Activated CD4-positive, alpha-beta T cell treated with anti-CD3 and anti-CD28 coated beads, Interleukin-2, amount 10 ng/mL, durations not matched to agents 24 days and 14 days (primary cell): ENCODE measurements at regions of chr3 and their contacts with region 1.

Region 1: DNA sequence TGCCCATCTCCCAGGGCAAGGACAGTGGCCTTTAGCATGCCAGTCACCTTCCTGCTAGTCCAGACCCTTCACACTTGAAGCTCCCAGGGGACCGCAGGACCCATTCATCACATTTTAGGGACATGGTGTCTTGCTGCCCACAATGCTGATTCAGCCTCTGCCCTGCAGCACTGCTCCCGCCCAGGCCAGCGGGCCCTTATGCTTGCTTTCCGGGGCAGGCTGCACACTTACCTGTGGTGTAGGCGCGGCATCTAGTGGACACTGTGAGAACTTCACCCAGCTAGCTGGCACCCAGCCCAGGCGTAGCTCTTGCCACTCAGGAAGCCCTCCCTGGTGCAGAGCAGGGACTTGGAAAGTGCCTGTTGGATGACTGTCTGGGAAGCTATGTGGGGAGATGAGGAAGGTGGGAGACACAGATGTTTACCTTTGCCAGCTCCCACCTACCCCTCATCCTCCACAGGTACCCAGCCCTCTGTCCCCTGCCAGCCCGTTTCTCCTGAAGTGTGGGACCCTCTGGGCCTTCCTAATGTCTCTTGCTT is 26.2 kb upstream of the NR2C2 start:
- DNase-seq: peak; percentile 94
- H3K4me3 Mint-ChIP-seq: no peak overlapping the region
- H3K27ac Mint-ChIP-seq: no peak overlapping the region
- H3K4me1 Mint-ChIP-seq: no peaks in the 10 kb centered on the region
- H3K27me3 Mint-ChIP-seq: no peaks in the 10 kb centered on the region

Region 2: GRCh38 chr3:14508961-14509795 is 412.0 kb before region 1 on chr3:
- intact Hi-C with region 1: loop called (anchors 1 kb)
- DNase-seq: peak; percentile 91
- H3K4me3 Mint-ChIP-seq: no peak overlapping the region
- H3K27ac Mint-ChIP-seq: no peak overlapping the region
- H3K4me1 Mint-ChIP-seq: peaks cover 3% of the 10 kb centered on the region
- H3K27me3 Mint-ChIP-seq: peaks cover 2% of the 10 kb centered on the region

Region 3: DNA sequence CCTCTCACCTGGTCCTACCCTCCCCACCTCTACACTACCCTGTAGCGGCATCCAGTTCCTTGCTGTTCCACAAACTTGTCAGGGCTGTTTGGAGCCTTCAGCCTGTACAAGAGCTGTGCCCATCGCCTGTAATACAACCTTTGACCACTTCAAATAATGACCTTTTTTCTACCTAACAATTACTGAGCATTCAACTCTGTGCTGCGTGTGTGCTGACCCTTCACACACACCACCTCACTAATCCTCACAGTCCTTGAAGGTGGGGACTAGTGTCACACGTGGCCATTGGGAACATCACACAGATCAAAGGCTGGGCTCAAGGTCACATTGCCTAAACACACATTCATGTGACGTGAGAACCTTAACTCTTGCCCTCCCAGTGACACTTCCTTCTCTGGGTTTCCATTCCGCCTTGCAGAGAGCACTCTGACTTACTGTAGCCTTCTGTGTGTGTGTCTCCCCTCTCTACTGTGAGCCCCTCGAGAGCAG is 243.1 kb before region 1 on chr3:
- intact Hi-C with region 1: loop called (anchors 1 kb)
- DNase-seq: no peak
- H3K4me3 Mint-ChIP-seq: no peak overlapping the region
- H3K27ac Mint-ChIP-seq: no peak overlapping the region
- H3K4me1 Mint-ChIP-seq: no peaks in the 10 kb centered on the region
- H3K27me3 Mint-ChIP-seq: no peaks in the 10 kb centered on the region

Region 4: DNA sequence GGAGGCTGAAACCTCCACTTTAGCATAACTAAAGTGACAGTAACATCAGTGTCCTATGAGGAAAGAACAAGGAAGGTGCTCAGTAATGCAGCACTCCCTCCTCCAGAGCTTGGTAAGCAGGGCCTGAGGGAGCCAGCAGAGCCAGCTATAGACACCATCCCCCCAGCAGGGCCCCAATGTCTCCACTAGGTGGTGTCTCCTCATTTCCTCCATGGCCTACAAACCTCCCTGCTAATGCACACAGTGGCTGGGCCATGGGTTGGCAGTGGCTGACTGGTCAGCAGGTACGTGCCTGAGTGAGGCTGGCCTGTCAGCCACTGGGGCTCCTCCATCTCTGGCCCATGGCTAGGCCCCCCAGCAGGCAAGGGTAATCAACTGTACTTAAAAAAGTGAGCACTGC is 130.4 kb after region 1 on chr3:
- intact Hi-C with region 1: loop called (anchors 5 kb)
- DNase-seq: peak; percentile 82
- H3K4me3 Mint-ChIP-seq: no peak overlapping the region
- H3K27ac Mint-ChIP-seq: no peak overlapping the region
- H3K4me1 Mint-ChIP-seq: peaks cover 21% of the 10 kb centered on the region
- H3K27me3 Mint-ChIP-seq: no peaks in the 10 kb centered on the region